ENCODE measurements at regions of chr7 and their contacts with region 1.

Region 1: DNA sequence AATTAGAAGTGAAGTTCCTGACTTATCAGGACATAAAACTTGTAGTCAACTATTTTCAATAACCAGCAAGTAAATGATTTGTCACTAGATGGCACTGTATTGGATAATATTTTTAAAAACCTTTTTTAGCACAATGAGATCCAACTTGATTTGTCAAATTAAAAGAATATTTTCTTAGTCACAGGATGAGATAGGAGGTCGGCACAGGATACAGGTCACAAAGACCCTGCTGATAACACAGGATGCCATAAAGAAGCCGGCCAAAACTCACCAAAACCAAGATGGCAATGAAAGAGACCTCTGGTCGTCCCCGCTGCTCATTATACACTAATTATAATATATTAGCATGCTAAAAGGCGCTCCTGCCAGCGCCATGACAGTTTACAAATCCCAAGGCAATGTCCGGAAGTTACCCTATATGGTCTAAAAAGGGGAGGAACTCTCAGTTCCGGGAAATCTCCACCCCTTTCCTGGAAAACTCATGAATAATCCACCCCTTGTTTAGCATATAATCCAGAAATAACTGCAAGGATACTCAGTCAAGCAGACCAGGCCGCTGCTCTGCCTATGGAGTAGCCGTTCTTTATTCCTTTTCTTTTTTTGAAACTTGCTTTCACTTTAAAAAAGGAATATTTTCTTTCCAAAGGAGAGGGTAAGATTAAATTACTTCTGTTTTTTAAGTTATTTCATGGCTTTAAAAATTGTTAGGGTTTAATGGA is 255.7 kb upstream of the MKLN1 start:
- DNase-seq: no peak
- H3K4me3 Mint-ChIP-seq: no peak overlapping the region
- H3K27ac Mint-ChIP-seq: peak overlapping the region; percentile 27
- H3K4me1 Mint-ChIP-seq: peaks cover 56% of the 10 kb centered on the region
- H3K27me3 Mint-ChIP-seq: no peaks in the 10 kb centered on the region

Region 2: DNA sequence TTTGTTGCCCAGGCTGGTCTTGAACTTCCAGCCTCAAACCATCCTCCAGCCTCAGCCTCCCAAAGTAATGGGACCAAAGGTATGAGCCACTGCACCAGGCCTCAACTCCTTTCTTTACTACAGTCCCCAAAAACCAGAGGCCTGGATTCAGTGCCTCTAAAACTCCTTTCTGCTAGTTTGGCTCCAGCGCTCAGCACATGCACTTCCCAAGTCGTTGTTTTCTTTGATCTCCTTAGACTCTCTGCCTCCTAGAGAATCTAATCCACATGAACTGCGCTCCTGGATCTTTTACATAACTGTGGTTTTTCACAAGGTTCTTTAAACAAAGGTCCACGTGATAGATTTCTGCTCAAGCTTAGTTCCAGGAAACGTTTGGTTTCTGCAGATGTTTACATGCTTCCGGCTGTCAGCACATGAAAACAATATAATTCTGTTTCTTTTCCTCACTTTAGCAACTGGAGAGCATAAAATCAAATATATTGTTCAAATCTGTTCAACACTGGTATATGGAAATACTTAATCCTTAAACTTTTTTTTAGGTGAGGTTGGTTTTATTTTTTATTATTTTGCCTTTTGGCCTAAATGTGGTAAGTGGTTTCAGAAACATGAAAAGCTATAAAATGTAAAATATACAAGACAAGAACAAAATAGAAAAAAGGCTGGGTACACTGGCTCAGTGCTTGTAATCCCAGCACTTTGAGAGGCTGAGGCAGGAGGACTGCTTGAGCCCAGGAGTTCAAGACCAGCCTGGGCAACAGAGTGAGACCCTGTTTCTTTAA is 14.7 kb before region 1 on chr7:
- CTCF ChIA-PET with region 1: interaction called, 48 read pairs
- POLR2A ChIA-PET with region 1: interaction called, 10 read pairs
- DNase-seq: peak; percentile 34
- H3K4me3 Mint-ChIP-seq: peak overlapping the region; percentile 72
- H3K27ac Mint-ChIP-seq: peak overlapping the region; percentile 96
- H3K4me1 Mint-ChIP-seq: peaks cover 57% of the 10 kb centered on the region
- H3K27me3 Mint-ChIP-seq: no peaks in the 10 kb centered on the region

Region 3: GRCh38 chr7:131094685-131095084 is 22.7 kb after region 1 on chr7:
- CTCF ChIA-PET with region 1: no interaction called
- POLR2A ChIA-PET with region 1: no interaction called
- DNase-seq: no peak
- H3K4me3 Mint-ChIP-seq: no peak overlapping the region
- H3K27ac Mint-ChIP-seq: no peak overlapping the region
- H3K4me1 Mint-ChIP-seq: peaks cover 49% of the 10 kb centered on the region
- H3K27me3 Mint-ChIP-seq: no peaks in the 10 kb centered on the region

Region 4: GRCh38 chr7:131272086-131272485 is 200.1 kb after region 1 on chr7:
- CTCF ChIA-PET with region 1: no interaction called
- POLR2A ChIA-PET with region 1: no interaction called
- DNase-seq: no peak
- H3K4me3 Mint-ChIP-seq: no peak overlapping the region
- H3K27ac Mint-ChIP-seq: no peak overlapping the region
- H3K4me1 Mint-ChIP-seq: no peaks in the 10 kb centered on the region
- H3K27me3 Mint-ChIP-seq: peaks cover 5% of the 10 kb centered on the region

Region 5: GRCh38 chr7:131424219-131424822 is 352.4 kb after region 1 on chr7:
- CTCF ChIA-PET with region 1: interaction called, 15 read pairs
- POLR2A ChIA-PET with region 1: no interaction called
- DNase-seq: no peak
- H3K4me3 Mint-ChIP-seq: no peak overlapping the region
- H3K27ac Mint-ChIP-seq: no peak overlapping the region
- H3K4me1 Mint-ChIP-seq: peaks cover 2% of the 10 kb centered on the region
- H3K27me3 Mint-ChIP-seq: no peaks in the 10 kb centered on the region